Ovary (tissue), 10 donors: ENCODE measurements at regions of chr16 and their contacts with region 1.

Region 1: DNA sequence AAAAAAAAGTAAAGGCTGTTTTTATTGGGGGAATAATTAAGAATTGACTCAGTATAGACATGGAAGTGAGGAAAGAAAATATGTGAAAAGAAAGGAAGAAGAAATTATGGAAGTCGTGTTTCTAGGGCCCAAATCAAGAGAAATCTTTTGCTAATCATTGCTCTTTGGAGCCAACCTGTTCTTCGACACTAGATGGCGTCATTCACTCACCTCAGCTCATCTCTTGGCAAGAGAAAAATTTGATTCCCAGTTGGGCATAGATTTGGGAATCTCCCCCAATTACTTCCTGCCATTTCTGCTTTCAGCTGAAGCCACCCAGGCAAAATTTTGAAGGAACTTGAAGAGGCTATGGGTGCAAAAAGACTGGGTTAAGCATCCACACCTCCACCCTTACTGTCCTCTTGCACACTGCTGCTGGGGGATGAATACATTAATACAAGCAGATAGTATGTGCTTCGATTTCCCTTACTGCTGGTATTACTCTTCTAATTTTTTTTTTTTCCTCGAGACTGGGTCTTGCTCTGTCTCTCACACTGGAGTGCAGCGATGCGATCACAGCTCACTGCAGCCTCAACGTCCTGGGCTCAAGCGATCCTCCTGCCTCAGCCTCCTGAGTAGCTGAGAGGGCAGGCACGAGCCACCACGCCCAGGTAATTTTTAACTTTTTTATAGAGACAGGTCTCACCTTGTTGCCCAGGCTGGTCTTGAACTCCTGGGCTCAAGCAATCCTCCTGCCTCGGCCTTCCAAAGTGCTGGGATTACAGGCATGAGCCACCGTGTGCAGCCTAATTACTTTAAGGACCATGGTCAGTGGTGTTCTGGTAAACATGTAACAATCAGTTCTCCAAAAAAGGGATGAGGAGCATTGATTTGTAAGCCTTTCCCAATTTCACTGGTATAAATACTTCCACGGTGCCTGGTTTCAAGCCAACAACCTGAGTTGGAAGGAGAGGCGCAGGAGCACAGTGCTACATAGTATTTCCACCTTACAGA is 13.5 kb downstream of the PSMD7 start:
- DNase-seq: peak in 1 of 5 donors; percentile 29
- H3K4me3 ChIP-seq: no peak overlapping the region
- H3K27ac ChIP-seq: no peak overlapping the region
- H3K4me1 ChIP-seq: no peaks in the 10 kb centered on the region
- H3K27me3 ChIP-seq: no peaks in the 10 kb centered on the region
- CTCF ChIP-seq: peak in 2 of 3 donors; percentile 57
- EP300 ChIP-seq: no peak
- POLR2A ChIP-seq: no peak

Region 2: DNA sequence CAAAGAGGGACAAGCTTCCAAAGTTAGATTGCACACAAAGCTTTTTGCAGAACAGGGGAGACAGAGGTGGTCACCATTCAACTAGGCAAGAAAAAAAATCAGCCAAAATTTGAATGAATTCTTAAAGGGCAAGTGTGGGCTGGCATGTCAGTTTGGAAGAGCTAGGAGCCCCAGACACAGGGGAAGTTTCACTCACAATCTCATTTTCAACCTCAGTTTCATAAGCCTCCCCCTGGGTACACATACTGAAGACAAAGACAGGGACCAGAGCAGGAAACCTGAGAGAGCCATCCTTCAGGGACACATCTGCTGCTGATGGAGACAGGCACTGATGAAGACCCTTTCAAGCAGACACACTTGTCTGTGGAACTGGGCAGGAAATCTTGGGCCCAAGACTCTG is 119.8 kb before region 1 on chr16:
- intact Hi-C with region 1: no loop called
- DNase-seq: no peak
- H3K4me3 ChIP-seq: no peak overlapping the region
- H3K27ac ChIP-seq: no peak overlapping the region
- H3K4me1 ChIP-seq: no peaks in the 10 kb centered on the region
- H3K27me3 ChIP-seq: no peaks in the 10 kb centered on the region
- CTCF ChIP-seq: no peak
- EP300 ChIP-seq: no peak
- POLR2A ChIP-seq: no peak

Region 3: GRCh38 chr16:74226338-74226954 is 83.6 kb before region 1 on chr16:
- intact Hi-C with region 1: no loop called
- DNase-seq: no peak
- H3K4me3 ChIP-seq: no peak overlapping the region
- H3K27ac ChIP-seq: no peak overlapping the region
- H3K4me1 ChIP-seq: no peaks in the 10 kb centered on the region
- H3K27me3 ChIP-seq: no peaks in the 10 kb centered on the region
- CTCF ChIP-seq: no peak
- EP300 ChIP-seq: no peak
- POLR2A ChIP-seq: no peak

Region 4: GRCh38 chr16:74438492-74439041 is 128.5 kb after region 1 on chr16:
- intact Hi-C with region 1: loop called in 1 of 4 experiments (anchors 10 kb)
- DNase-seq: no peak
- H3K4me3 ChIP-seq: no peak overlapping the region
- H3K27ac ChIP-seq: no peak overlapping the region
- H3K4me1 ChIP-seq: no peaks in the 10 kb centered on the region
- H3K27me3 ChIP-seq: no peaks in the 10 kb centered on the region
- CTCF ChIP-seq: no peak
- EP300 ChIP-seq: no peak
- POLR2A ChIP-seq: no peak

Region 5: GRCh38 chr16:74501484-74502479 is 191.7 kb after region 1 on chr16:
- intact Hi-C with region 1: no loop called
- DNase-seq: no peak
- H3K4me3 ChIP-seq: no peak overlapping the region
- H3K27ac ChIP-seq: no peak overlapping the region
- H3K4me1 ChIP-seq: no peaks in the 10 kb centered on the region
- H3K27me3 ChIP-seq: no peaks in the 10 kb centered on the region
- CTCF ChIP-seq: no peak
- EP300 ChIP-seq: no peak
- POLR2A ChIP-seq: no peak